ENCODE measurements at regions of chr2 and their contacts with region 1.

Region 1: GRCh38 chr2:200703127-200703925 is 108.4 kb upstream of the BZW1 start:
- DNase-seq: peak; percentile 26
- H3K4me3 ChIP-seq: no peak overlapping the region
- CTCF ChIP-seq: peak; percentile 41

Region 2: DNA sequence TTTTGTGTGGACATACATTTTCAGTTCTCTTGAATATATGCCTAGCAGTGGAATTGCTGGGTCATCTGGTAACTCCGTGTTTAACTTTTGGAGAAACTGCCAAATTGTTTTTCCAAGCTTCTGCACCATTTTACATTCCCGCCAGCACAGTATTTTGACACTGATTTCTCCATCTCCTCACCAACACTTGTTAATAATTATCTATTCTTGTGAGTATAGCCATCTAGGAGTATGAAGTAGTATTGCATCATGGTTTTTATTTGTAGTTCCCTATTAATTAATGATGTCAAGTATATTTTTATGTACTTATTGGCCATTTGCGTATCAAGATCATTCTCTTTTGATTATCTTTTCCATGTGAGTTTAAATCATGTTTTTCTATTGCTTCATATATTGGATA is 135.4 kb before region 1 on chr2:
- CTCF ChIA-PET with region 1: interaction called, 74 read pairs
- POLR2A ChIA-PET with region 1: no interaction called
- DNase-seq: no peak
- H3K4me3 ChIP-seq: no peak overlapping the region
- CTCF ChIP-seq: no peak

Region 3: DNA sequence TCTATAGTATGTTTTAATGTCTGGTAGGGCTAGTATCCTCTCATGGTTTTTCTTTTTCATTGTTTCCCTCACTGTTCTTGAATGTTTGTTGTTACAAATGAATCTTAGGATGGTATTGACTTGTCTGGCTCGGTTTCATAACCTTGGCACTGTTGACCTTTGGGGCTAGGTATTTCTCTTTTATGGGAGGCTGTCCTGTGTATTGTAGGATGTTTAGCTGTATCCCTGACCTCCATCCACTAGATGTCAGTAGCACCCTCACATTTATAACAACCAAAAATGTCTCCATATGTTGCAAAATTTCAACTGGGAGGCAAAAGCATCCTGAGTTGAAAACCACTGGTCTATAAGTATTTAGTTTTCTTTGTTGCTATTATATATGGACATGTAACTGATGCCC is 124.5 kb before region 1 on chr2:
- CTCF ChIA-PET with region 1: interaction called, 78 read pairs
- POLR2A ChIA-PET with region 1: no interaction called
- DNase-seq: no peak
- H3K4me3 ChIP-seq: no peak overlapping the region
- CTCF ChIP-seq: peak; percentile 44

Region 4: GRCh38 chr2:200585730-200586643 is 117.3 kb before region 1 on chr2 and contains the start of gene AOX1:
- CTCF ChIA-PET with region 1: interaction called, 78 read pairs
- POLR2A ChIA-PET with region 1: no interaction called
- DNase-seq: no peak
- H3K4me3 ChIP-seq: peak within 1 kb of the TSS; percentile 63
- CTCF ChIP-seq: peak; percentile 29

Region 5: DNA sequence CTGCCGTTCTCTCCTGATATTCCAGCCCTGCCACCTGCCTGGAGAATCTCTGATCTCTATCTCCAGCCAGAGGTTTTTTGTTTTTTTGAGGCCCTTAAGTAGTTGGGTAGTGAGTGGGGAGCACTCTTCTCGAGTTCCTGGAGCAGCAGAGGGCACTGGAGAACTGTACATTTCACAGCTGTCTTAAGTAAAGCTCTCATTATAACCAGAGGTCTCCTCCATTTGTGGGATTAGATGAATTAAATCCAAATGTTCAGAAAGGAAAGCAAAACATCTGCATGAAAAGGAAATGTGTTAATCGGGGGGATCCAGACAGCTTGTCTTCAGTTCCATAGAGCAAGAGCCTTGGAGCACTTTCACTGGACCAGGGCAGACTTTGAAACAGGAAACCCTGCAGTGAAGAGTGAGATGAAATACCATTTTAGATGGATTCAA is 84.7 kb before region 1 on chr2:
- CTCF ChIA-PET with region 1: interaction called, 195 read pairs
- POLR2A ChIA-PET with region 1: no interaction called
- DNase-seq: peak; percentile 45
- H3K4me3 ChIP-seq: no peak overlapping the region
- CTCF ChIP-seq: peak; percentile 36

Region 6: DNA sequence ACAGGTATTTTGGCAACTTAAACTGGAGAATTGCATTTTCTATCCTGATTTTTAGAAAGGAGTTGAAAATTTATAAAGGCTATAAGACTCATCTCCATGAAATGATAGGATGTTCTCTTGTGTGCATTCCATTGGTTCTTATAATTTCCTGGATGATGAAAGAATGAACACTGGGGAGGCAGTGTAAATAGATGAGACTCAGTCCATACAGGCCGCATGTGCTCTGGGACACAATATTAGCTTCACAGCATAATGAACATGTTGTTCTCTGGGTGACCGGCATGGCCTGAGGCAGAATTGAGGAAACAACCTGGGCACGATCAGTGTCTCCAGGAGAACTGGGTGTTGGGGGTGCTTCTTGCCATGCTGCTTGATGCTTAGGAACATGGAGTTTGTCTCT is 78.7 kb before region 1 on chr2:
- CTCF ChIA-PET with region 1: interaction called, 36 read pairs
- POLR2A ChIA-PET with region 1: no interaction called
- DNase-seq: peak; percentile 75
- H3K4me3 ChIP-seq: no peak overlapping the region
- CTCF ChIP-seq: no peak

Region 7: DNA sequence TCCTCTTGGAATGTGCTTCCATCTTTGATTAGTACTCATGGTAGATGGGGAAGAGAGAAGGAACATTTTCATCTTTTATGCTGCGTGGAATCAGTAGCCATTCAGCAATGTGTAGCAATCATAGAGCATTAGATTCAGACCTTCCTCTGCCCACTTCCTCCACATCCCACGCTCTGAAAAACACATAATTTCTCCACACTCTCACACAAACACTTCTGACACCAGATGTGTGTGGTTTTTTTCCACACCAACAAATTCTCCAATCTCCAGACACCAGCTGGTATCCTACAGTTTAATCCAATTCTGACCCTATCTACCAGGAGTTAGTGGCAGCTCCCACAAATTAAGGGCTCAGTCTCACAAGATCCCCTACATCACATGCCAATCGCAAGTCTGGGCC is 14.2 kb before region 1 on chr2:
- CTCF ChIA-PET with region 1: interaction called, 28 read pairs
- POLR2A ChIA-PET with region 1: no interaction called
- DNase-seq: no peak
- H3K4me3 ChIP-seq: no peak overlapping the region
- CTCF ChIP-seq: no peak

Measured in AG04449 (cell line).